ENCODE measurements at regions of chr12 and their contacts with region 1.

Region 1: GRCh38 chr12:93990832-93991803 is 157.3 kb upstream of the PLXNC1 start:
- DNase-seq: peak; percentile 31 to 60
- H3K4me3 ChIP-seq: no peak overlapping the region
- H3K27ac ChIP-seq: no peak overlapping the region
- H3K4me1 ChIP-seq: peaks cover 0 to 4% (median 2%) of the 10 kb centered on the region in 4 experiments; a peak in 5 of 7 replicates
- H3K27me3 ChIP-seq: no peaks in the 10 kb centered on the region
- CTCF ChIP-seq: peak; percentile 52 to 74 (median 63)
- EP300 ChIP-seq: no peak
- POLR2A ChIP-seq: no peak
- RAD21 ChIP-seq: peak; percentile 67 to 71

Region 2: DNA sequence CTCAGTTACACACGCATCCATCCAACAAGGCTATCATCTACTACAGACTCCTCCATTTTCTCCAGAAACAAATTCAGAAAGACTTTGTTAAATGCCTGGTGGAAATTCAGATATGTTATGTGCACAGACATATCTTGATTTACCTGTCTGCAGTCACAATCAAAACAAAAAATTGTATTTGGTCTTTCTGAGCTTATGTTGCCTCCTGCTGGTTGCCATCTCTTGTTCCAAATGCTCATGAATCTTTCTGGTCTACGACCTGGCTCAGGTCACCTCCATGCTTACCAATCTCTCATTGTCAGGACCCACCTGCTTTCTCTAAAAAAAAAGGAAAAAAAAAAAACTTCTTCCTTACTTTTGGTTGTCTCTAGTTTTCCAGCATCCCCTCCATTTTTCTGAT is 11.9 kb before region 1 on chr12:
- CTCF ChIA-PET with region 1: interaction called, 15 read pairs
- POLR2A ChIA-PET with region 1: no interaction called
- DNase-seq: no peak
- H3K4me3 ChIP-seq: no peak overlapping the region
- H3K27ac ChIP-seq: no peak overlapping the region
- H3K4me1 ChIP-seq: peaks cover 0 to 5% (median 3%) of the 10 kb centered on the region in 4 experiments; a peak in 3 of 7 replicates
- H3K27me3 ChIP-seq: no peaks in the 10 kb centered on the region
- CTCF ChIP-seq: peak in 2 of 3 experiments; percentile 18 to 25; a peak in 2 of 4 replicates
- EP300 ChIP-seq: no peak
- POLR2A ChIP-seq: no peak
- RAD21 ChIP-seq: peak; percentile 61 to 67

Measured in H1 (cell line).